ENCODE measurements at regions of chr10 and their contacts with region 1.

Region 1: DNA sequence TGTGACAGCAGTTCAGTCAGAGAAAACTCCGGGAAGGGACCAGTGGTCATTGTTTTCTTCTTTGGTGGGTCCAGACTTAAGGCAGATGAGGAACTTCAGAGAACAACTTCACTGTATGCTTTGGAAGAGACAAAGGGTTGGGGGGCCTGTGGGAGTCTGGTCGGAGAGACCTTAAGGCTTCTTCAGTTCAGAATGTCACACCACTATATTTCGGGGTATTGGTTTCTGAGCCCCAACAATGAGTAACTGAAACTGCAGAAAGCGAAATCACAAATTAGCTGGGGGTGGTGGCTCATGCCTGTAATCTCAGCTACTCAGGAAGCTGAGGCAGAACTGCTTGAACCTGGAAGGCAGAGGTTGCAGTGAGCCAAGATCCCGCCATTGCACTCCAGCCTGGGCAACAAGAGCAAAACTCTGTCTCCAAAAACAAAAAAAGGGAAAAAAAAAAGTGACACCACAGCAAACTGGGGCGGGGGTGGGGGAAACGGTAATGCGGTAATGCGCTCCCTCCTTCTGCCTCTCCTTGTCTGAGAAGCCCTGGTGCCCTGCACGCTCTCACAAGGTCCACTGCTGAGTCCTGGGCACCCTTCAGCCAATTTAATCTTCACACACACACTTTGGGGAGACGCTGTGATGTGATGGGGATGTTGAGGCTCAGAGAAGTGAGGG is 2.2 kb upstream of the ADIRF start:
- DNase-seq: peak in 1 of 2 donors; percentile 70
- ATAC-seq: no peak
- H3K4me3 ChIP-seq: no peak overlapping the region
- H3K27ac ChIP-seq: peak overlapping the region in 1 of 2 donors; percentile 36
- H3K4me1 ChIP-seq: no peaks in the 10 kb centered on the region
- H3K27me3 ChIP-seq: no peaks in the 10 kb centered on the region

Region 2: GRCh38 chr10:86931872-86932271 is 34.2 kb before region 1 on chr10:
- intact Hi-C with region 1: no loop called
- DNase-seq: no peak
- ATAC-seq: no peak
- H3K4me3 ChIP-seq: no peak overlapping the region
- H3K27ac ChIP-seq: no peak overlapping the region
- H3K4me1 ChIP-seq: no peaks in the 10 kb centered on the region
- H3K27me3 ChIP-seq: no peaks in the 10 kb centered on the region

Region 3: GRCh38 chr10:86941977-86942442 is 24.1 kb before region 1 on chr10:
- intact Hi-C with region 1: loop called in 1 of 2 experiments (anchors 2 kb)
- DNase-seq: no peak
- ATAC-seq: no peak
- H3K4me3 ChIP-seq: no peak overlapping the region
- H3K27ac ChIP-seq: no peak overlapping the region
- H3K4me1 ChIP-seq: peaks cover 0 to 2% of the 10 kb centered on the region in 2 donors
- H3K27me3 ChIP-seq: no peaks in the 10 kb centered on the region

Region 4: GRCh38 chr10:87068281-87068680 is 102.2 kb after region 1 on chr10:
- intact Hi-C with region 1: no loop called
- DNase-seq: no peak
- ATAC-seq: no peak
- H3K4me3 ChIP-seq: no peak overlapping the region
- H3K27ac ChIP-seq: no peak overlapping the region
- H3K4me1 ChIP-seq: no peaks in the 10 kb centered on the region
- H3K27me3 ChIP-seq: no peaks in the 10 kb centered on the region

Measured in aorta (tissue), 5 donors.